ENCODE measurements at regions of chr12 and their contacts with region 1.

Region 1: DNA sequence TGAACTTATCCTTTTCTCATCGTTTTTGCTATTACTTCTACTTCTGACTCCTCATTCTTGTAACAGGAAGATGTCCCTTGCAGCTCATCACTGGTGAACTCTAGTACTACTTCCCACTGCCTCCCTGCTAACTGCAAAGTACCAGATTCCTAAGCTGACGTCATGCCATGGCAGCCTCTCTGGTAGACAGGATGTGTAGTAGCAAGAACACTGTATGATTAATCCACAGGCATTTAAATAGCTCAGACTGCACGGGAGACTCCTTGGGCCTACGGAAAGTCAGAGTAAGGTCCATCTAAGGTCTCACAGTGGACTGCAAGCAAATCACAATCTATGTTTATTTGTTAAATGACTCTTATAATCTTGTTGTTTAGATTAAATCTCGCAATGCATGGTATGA is 43.5 kb downstream of the DNAI7 start:
- DNase-seq: peak; percentile 81
- H3K27ac ChIP-seq: no peak overlapping the region
- CTCF ChIP-seq: no peak

Region 2: DNA sequence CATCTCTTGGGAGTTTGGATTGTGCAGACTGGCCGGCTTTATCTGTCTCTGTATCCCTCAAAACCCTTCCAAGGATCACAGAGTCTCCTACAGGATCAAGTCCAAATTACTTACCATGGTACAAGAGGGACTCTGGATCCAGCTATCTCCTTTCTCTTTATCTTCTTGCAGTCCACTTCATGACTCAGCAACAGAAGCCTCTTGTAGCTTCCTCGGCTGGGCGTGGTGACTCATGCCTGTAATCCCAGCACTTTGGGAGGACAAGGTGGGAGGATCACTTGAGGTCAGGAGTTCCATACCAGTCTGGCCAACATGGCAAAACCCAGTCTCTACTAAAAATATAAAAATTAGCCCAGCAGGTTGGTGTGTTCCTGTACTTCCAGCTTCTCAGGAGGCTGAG is 392.3 kb before region 1 on chr12:
- CTCF ChIA-PET with region 1: no interaction called
- POLR2A ChIA-PET with region 1: no interaction called
- DNase-seq: no peak
- H3K27ac ChIP-seq: no peak overlapping the region
- CTCF ChIP-seq: no peak

Region 3: GRCh38 chr12:24991209-24992049 is 160.0 kb before region 1 on chr12:
- CTCF ChIA-PET with region 1: interaction called, 10 read pairs
- POLR2A ChIA-PET with region 1: no interaction called
- DNase-seq: peak; percentile 55
- H3K27ac ChIP-seq: no peak overlapping the region
- CTCF ChIP-seq: no peak; the same call in 1 of the 2 replicates

Region 4: DNA sequence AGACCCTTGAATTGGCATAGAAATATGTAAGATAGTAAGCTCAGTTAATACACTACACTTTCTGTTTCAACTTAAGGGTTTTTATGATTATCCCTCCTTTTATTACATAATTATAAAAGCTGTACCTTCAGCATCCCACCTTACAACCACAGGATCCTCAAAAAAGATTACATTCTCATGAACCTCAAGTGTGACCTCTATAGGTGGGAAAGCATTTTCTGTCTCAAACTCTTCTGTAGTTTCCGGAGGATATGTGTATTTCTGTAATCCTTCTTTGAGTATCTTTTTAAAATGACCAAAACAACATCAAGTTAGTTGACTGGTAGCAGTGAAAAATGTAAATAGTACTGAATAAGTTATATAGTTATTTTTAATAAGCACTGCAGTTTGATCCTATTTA is 32.5 kb before region 1 on chr12:
- CTCF ChIA-PET with region 1: no interaction called
- POLR2A ChIA-PET with region 1: no interaction called
- DNase-seq: no peak
- H3K27ac ChIP-seq: no peak overlapping the region
- CTCF ChIP-seq: no peak

Region 5: DNA sequence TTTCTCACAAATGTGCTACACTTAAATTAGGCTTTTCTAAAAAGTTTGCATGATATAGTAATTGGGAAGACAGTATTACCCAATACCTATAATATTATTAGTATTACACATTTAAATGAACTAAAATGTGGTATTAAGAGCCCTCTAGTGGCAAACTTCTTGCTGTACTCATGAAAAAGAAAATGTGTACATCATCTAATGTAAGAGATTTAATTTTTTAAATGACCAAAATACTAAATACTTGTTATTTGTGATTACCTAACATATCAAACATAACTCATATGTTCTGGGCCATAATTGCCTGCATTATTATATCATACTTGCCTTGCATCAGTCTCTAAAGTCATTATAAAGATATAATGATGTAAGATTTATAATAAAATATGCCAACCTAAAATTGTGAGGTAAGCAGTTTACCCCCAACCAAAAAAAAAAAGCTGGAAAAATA is 20.7 kb before region 1 on chr12:
- CTCF ChIA-PET with region 1: interaction called, 13 read pairs
- POLR2A ChIA-PET with region 1: no interaction called
- DNase-seq: peak; percentile 31
- H3K27ac ChIP-seq: no peak overlapping the region
- CTCF ChIP-seq: peak; percentile 43; the same call in 1 of the 2 replicates

Region 6: DNA sequence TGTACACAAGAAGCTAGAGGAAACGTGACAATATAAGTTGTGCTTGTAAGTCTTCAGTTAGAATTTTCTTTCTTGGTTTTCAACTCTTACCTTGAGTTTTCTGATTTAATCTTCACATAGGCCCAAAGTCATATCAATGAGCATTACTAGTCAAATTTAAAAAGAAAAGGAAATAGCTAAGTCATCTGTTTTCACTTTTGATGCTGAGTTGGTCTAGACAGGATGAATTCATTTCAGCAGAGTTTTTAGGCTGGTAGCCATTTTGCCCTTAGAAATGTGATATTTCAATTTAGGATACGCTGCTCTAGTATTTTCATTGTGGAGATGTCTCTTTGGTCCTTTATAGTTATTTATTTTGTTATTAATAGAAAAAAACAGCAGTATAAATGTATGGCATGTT is 143.9 kb after region 1 on chr12:
- CTCF ChIA-PET with region 1: no interaction called
- POLR2A ChIA-PET with region 1: no interaction called
- DNase-seq: no peak
- H3K27ac ChIP-seq: no peak overlapping the region
- CTCF ChIP-seq: no peak

Measured in RWPE1 (cell line).